Calu3 (cell line): ENCODE measurements at regions of chr21 and their contacts with region 1.

Region 1: DNA sequence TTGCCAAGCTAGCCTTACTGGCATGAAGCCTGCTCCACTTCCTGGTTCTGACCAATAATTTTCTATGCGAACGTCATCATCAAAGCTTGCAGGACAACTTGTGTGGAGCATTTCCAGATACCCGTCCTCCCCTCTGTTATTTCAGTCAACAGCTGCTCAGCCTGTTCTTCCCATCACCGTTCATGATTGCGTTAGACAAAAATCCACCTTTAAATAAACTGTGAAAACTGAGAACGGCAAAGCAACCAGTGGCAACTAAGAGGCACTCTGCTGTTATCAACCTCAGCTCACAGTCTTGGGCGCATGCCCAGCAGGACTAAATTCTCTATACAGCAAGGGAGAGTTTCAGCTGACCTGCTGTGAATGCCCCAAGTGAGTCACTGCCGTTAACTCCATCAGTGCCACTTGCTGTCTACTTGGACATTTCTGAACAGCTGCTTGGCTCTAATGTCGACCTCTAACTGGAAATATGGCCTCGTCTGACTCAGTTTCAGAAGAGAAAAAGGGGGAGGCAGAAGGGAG is 207.4 kb upstream of the RUNX1 start:
- DNase-seq: peak; percentile 82
- H3K4me3 Mint-ChIP-seq: peak overlapping the region; percentile 66
- H3K27ac Mint-ChIP-seq: peak overlapping the region; percentile 98
- H3K4me1 Mint-ChIP-seq: peaks cover 66% of the 10 kb centered on the region
- H3K27me3 Mint-ChIP-seq: no peaks in the 10 kb centered on the region
- CTCF ChIP-seq: no peak

Region 2: GRCh38 chr21:34889716-34890469 is 366.6 kb before region 1 on chr21:
- CTCF ChIA-PET with region 1: no interaction called
- intact Hi-C with region 1: loop called (anchors 10 kb)
- DNase-seq: peak; percentile 84
- H3K4me3 Mint-ChIP-seq: peak overlapping the region; percentile 65
- H3K27ac Mint-ChIP-seq: peak overlapping the region; percentile 66
- H3K4me1 Mint-ChIP-seq: no peaks in the 10 kb centered on the region
- H3K27me3 Mint-ChIP-seq: no peaks in the 10 kb centered on the region
- CTCF ChIP-seq: peak; percentile 63

Region 3: DNA sequence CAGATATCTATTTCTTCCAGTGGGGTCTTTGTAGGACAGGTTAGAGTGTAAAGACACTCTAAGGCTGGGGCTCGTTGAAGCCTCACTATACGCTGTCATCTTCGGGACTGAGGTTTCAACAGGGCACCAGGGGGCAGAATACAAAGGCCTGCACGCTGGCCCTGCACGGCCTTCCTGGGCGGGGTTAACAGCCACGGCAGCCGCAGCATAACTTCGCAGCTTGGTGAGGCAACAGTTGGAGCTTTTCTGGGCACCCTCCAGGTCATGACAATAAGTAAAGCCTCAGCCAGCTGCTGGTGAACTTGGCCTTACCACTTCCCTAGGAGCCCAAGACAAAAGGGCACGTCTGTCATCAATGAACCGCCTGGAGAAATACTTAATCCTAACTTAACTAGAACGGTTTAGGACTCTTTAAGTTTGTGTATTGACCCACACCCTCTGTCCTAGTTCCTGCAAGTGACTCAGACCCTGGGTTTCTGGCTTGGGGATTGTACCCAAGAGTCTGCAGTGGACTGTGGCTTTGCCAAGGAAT is 205.2 kb before region 1 on chr21:
- CTCF ChIA-PET with region 1: interaction called, 3 read pairs
- intact Hi-C with region 1: loop called (anchors 10 kb)
- DNase-seq: peak; percentile 88
- H3K4me3 Mint-ChIP-seq: no peak overlapping the region
- H3K27ac Mint-ChIP-seq: peak overlapping the region; percentile 86
- H3K4me1 Mint-ChIP-seq: peaks cover 43% of the 10 kb centered on the region
- H3K27me3 Mint-ChIP-seq: no peaks in the 10 kb centered on the region
- CTCF ChIP-seq: peak; percentile 64

Region 4: GRCh38 chr21:35138665-35139381 is 117.7 kb before region 1 on chr21:
- CTCF ChIA-PET with region 1: no interaction called
- intact Hi-C with region 1: loop called (anchors 2 kb)
- DNase-seq: peak; percentile 78
- H3K4me3 Mint-ChIP-seq: no peak overlapping the region
- H3K27ac Mint-ChIP-seq: peak overlapping the region; percentile 95
- H3K4me1 Mint-ChIP-seq: peaks cover 39% of the 10 kb centered on the region
- H3K27me3 Mint-ChIP-seq: no peaks in the 10 kb centered on the region
- CTCF ChIP-seq: no peak

Region 5: GRCh38 chr21:35149698-35150097 is 106.8 kb before region 1 on chr21:
- CTCF ChIA-PET with region 1: no interaction called
- intact Hi-C with region 1: loop called (anchors 1 kb)
- DNase-seq: no peak
- H3K4me3 Mint-ChIP-seq: no peak overlapping the region
- H3K27ac Mint-ChIP-seq: peak overlapping the region; percentile 60
- H3K4me1 Mint-ChIP-seq: peaks cover 50% of the 10 kb centered on the region
- H3K27me3 Mint-ChIP-seq: no peaks in the 10 kb centered on the region
- CTCF ChIP-seq: no peak

Region 6: GRCh38 chr21:35217504-35218060 is 38.9 kb before region 1 on chr21:
- CTCF ChIA-PET with region 1: no interaction called
- intact Hi-C with region 1: loop called (anchors 5 kb)
- DNase-seq: peak; percentile 79
- H3K4me3 Mint-ChIP-seq: no peak overlapping the region
- H3K27ac Mint-ChIP-seq: peak overlapping the region; percentile 95
- H3K4me1 Mint-ChIP-seq: peaks cover 46% of the 10 kb centered on the region
- H3K27me3 Mint-ChIP-seq: no peaks in the 10 kb centered on the region
- CTCF ChIP-seq: no peak

Region 7: DNA sequence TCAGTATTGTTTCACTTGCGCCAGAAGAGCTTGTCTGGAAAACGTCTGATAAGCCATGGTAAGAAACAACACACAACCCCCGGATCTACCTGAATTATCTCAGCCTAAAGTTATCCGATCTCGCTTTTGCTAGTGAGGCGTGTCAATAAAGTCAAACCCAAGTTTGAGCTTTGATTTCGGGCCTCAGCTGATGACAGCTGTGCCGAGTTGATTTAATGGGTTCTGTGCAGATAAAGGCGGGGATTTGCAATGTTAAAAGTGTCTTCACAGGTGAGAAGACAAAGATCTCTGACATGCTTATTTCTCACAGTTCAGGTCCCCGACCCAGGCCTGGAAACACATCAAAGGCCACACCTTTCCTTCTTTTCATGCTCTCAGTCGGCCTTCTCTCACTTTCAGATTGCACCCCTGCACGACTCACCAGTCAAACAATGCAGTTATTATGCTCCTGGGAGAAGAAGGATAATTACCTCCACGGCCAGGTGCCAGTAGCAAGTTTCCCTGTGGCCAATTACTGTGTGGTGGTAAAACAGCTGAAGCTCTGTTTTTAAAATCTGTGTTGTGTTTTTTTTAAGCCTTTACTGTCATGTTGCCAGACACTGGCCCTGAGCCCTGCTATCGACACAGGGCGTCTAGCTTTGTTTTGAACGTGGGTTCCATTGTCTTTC is 37.8 kb after region 1 on chr21:
- CTCF ChIA-PET with region 1: interaction called, 4 read pairs
- intact Hi-C with region 1: loop called (anchors 5 kb)
- DNase-seq: peak; percentile 69
- H3K4me3 Mint-ChIP-seq: peak overlapping the region; percentile 56
- H3K27ac Mint-ChIP-seq: peak overlapping the region; percentile 93
- H3K4me1 Mint-ChIP-seq: peaks cover 27% of the 10 kb centered on the region
- H3K27me3 Mint-ChIP-seq: no peaks in the 10 kb centered on the region
- CTCF ChIP-seq: no peak

Region 8: DNA sequence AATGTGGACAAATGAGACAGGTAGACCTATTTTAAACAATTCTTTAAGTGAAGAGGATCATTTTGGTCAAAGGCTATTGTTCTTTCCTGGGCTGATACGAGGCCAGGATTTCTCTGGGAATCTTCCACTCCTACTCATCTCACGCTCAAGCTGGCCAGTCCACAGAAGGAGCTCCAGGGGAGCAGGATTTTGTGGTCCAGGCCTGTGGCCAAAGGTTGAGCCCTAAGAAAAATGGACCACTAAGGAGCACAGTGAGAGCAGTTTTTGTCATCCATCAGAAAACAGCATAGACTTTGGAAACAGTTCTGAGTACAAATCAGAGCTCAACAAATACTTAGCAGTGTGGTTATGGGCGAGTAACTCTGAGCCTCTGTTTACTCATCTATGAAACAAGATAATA is 52.8 kb after region 1 on chr21:
- CTCF ChIA-PET with region 1: no interaction called
- intact Hi-C with region 1: no loop called
- DNase-seq: no peak
- H3K4me3 Mint-ChIP-seq: no peak overlapping the region
- H3K27ac Mint-ChIP-seq: no peak overlapping the region
- H3K4me1 Mint-ChIP-seq: no peaks in the 10 kb centered on the region
- H3K27me3 Mint-ChIP-seq: no peaks in the 10 kb centered on the region
- CTCF ChIP-seq: no peak

Region 9: DNA sequence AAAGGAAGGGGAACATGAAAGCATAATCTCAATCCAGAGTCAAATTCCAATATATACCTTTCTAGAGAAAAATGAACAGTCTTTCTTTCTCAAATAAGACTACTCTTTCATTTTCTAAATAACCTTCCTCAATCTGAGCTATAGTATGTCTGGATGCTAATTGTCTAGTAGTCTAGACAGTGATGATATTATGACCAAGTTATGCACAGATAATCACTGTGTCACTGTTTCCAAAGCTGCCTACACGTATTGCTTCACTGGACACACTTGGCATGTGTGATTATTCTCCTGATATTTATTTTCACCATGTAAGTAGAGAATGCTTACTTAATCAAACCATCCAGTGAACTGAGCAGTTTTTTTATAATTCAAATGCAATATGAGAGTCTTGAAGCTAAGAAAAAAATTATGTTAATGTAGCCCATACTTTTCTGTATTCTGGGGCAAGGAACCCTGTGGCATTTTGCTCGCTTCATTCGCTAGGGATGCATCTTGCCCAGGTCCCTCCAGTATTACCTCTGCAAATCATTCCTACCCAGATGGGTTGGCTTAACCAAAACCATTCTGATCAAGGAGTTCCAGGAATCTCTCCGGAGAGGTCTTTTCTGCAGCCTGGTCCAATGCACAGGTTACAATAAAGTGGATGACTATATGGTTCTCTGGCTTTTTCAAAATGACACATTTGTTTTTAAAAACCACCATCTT is 95.7 kb after region 1 on chr21:
- CTCF ChIA-PET with region 1: no interaction called
- intact Hi-C with region 1: no loop called
- DNase-seq: no peak
- H3K4me3 Mint-ChIP-seq: no peak overlapping the region
- H3K27ac Mint-ChIP-seq: no peak overlapping the region
- H3K4me1 Mint-ChIP-seq: no peaks in the 10 kb centered on the region
- H3K27me3 Mint-ChIP-seq: no peaks in the 10 kb centered on the region
- CTCF ChIP-seq: no peak